Naive thymus-derived CD8-positive, alpha-beta T cell (primary cell): ENCODE measurements at regions of chr6 and their contacts with region 1.

Region 1: GRCh38 chr6:29708432-29709179 is 14.6 kb upstream of the HLA-F start:
- DNase-seq: peak; percentile 32 to 97 (median 86)
- ATAC-seq: peak; percentile 88 to 91
- H3K4me3 Mint-ChIP-seq: peak overlapping the region; percentile 70 to 91 (median 84)
- H3K27ac Mint-ChIP-seq: peak overlapping the region; percentile 86 to 98 (median 94)
- H3K4me1 Mint-ChIP-seq: peaks cover 53 to 86% (median 79%) of the 10 kb centered on the region in 4 donors
- H3K27me3 Mint-ChIP-seq: peaks cover 0 to 3% (median 0%) of the 10 kb centered on the region in 5 donors

Region 2: DNA sequence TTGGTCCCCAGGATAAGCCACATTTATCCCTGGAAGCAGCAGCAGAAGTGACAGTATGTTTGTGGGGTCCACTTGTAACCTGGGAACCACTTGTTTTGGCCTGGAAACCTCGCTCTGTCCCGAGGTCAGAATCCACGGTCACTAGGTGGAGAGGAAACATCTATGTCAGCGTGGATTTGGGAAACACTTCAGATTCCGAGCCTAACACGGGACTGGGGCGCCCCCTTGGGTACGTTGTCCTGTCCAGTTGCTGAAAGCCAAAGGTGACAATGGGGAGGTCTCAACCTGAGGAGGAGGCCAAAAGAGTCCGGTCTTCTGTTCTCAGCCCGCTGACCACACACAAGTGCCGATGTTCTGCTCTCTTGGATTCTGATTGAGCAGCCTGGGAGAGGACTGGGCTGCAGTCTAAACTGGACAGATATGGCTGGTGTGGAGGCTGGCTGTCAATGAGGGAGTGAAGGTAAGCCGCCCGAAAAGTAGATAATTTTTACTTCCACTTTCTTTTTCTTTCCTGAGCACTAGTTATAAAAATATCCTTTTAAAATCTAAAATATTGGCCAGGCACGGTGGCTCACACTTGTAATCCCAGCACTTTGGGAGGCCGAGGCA is 22.8 kb before region 1 on chr6:
- POLR2A ChIA-PET with region 1: no interaction called
- DNase-seq: no peak
- ATAC-seq: no peak
- H3K4me3 Mint-ChIP-seq: no peak overlapping the region
- H3K27ac Mint-ChIP-seq: no peak overlapping the region
- H3K4me1 Mint-ChIP-seq: peaks cover 0 to 3% (median 0%) of the 10 kb centered on the region in 4 donors
- H3K27me3 Mint-ChIP-seq: peaks cover 0 to 9% (median 0%) of the 10 kb centered on the region in 5 donors

Region 3: GRCh38 chr6:29723262-29723665 is 14.7 kb after region 1 on chr6 and contains the start of gene HLA-F:
- POLR2A ChIA-PET with region 1: interaction called, 33 read pairs
- DNase-seq: peak; percentile 65 to 94 (median 86)
- ATAC-seq: peak; percentile 83 to 84
- H3K4me3 Mint-ChIP-seq: peak within 1 kb of the TSS; percentile 92 to 98 (median 98)
- H3K27ac Mint-ChIP-seq: peak within 1 kb of the TSS; percentile 91 to 100 (median 98)
- H3K4me1 Mint-ChIP-seq: peaks cover 33 to 56% (median 53%) of the 10 kb centered on the region in 4 donors
- H3K27me3 Mint-ChIP-seq: no peaks in the 10 kb centered on the region
- polyA plus RNA-seq, gene HLA-F: 457 to 626 (median 619) TPM

Region 4: DNA sequence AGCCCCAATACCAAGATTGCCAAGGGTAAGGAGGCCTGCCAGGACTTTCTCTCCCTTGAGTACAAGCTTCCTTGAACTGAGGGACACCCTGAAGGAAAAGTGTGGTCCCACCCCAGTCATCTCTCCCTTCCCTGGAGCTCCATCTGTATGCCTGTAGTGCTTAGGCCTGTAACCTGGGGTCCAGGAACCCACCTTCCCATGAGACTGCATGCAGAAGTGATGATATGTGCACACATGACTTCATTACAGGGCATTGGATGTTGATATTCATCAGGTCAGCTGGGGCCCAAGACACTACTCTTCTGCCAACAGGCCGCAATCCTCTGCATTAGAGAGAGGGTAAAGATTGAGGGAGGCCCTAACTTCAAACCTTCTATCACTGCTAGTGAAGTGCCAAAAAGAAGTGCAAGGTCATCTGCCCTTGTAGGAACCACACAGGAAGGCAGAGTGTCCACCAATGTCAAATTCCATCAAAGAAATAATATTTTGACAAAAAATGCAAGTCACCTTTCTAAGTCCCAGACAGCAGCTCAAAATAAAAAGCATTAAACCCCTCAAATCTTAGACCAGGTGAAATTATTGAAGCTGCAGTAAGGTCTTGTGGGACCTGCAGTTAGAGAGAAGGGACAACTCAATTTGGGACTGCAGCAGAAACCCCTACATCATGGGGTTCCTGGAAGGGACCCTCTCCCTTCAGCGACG is 19.7 kb after region 1 on chr6:
- POLR2A ChIA-PET with region 1: interaction called, 16 read pairs
- DNase-seq: no peak
- ATAC-seq: no peak
- H3K4me3 Mint-ChIP-seq: peak overlapping the region in 9 of 10 donors; percentile 20 to 98 (median 69)
- H3K27ac Mint-ChIP-seq: peak overlapping the region; percentile 61 to 99 (median 77)
- H3K4me1 Mint-ChIP-seq: peaks cover 38 to 82% (median 69%) of the 10 kb centered on the region in 4 donors
- H3K27me3 Mint-ChIP-seq: no peaks in the 10 kb centered on the region

Region 5: DNA sequence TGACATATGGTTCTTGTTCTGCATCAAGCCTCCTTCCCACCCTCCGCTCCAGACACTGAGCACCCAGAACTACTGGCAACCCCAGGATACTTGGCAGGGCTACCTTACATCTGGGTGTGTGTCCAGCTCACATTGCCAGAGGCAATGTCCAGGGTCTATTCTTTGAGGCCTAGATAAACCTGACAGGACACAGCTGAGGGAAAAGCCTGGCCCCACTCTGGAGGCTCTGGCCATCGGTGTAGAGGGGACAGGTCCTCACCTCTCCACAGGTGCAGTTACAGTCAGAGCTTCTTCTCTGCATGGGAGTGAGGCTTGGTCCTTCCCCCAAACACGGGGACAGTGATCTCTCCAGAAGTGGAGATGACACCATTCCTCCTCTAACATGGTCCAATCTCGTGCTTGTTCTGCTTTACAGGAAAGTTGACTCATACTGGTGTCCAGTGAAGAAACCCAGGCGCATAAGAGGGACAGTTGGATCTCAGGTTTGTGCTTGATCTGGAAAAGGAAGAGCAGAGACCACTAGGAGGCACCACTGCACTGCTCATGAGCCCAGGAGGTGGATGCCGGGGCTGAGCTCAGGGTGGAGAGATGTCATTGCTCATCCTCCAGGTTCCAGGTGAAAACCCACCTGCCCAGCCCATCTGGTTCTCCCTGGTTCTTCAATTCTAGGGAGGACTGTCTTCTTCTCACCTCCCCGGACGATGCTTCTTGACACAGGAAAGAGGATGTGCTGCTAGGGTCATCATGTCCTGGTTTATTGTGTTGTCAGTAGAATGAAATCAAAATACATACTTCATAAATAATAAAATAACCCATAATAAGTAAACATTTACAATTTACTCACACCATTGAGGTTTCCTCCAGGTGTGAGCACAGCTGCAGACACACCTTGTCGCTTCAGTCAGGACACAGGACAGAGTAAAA is 29.4 kb after region 1 on chr6:
- POLR2A ChIA-PET with region 1: interaction called, 15 read pairs
- DNase-seq: peak; percentile 48 to 87 (median 68)
- ATAC-seq: peak; percentile 92 to 95
- H3K4me3 Mint-ChIP-seq: no peak overlapping the region
- H3K27ac Mint-ChIP-seq: peak overlapping the region in 1 of 10 donors; percentile 25
- H3K4me1 Mint-ChIP-seq: peaks cover 3 to 25% (median 18%) of the 10 kb centered on the region in 4 donors
- H3K27me3 Mint-ChIP-seq: no peaks in the 10 kb centered on the region

Region 6: GRCh38 chr6:29752451-29753308 is 44.1 kb after region 1 on chr6:
- POLR2A ChIA-PET with region 1: interaction called, 16 read pairs
- DNase-seq: peak; percentile 72 to 88 (median 80)
- ATAC-seq: peak; percentile 66 to 77
- H3K4me3 Mint-ChIP-seq: peak overlapping the region; percentile 85 to 99 (median 96)
- H3K27ac Mint-ChIP-seq: peak overlapping the region; percentile 86 to 98 (median 91)
- H3K4me1 Mint-ChIP-seq: peaks cover 29 to 63% (median 46%) of the 10 kb centered on the region in 4 donors
- H3K27me3 Mint-ChIP-seq: peaks cover 0 to 9% (median 0%) of the 10 kb centered on the region in 5 donors

Region 7: GRCh38 chr6:29933955-29934354 is 225.3 kb after region 1 on chr6:
- POLR2A ChIA-PET with region 1: no interaction called
- DNase-seq: no peak
- ATAC-seq: no peak
- H3K4me3 Mint-ChIP-seq: no peak overlapping the region
- H3K27ac Mint-ChIP-seq: no peak overlapping the region
- H3K4me1 Mint-ChIP-seq: peaks cover 0 to 9% (median 4%) of the 10 kb centered on the region in 4 donors
- H3K27me3 Mint-ChIP-seq: no peaks in the 10 kb centered on the region